Left cardiac atrium (tissue), 4 donors: ENCODE measurements at regions of chr18 and their contacts with region 1.

Region 1: GRCh38 chr18:26772715-26773114 is 92.8 kb downstream of the AQP4 start:
- DNase-seq: no peak
- ATAC-seq: no peak

Region 2: DNA sequence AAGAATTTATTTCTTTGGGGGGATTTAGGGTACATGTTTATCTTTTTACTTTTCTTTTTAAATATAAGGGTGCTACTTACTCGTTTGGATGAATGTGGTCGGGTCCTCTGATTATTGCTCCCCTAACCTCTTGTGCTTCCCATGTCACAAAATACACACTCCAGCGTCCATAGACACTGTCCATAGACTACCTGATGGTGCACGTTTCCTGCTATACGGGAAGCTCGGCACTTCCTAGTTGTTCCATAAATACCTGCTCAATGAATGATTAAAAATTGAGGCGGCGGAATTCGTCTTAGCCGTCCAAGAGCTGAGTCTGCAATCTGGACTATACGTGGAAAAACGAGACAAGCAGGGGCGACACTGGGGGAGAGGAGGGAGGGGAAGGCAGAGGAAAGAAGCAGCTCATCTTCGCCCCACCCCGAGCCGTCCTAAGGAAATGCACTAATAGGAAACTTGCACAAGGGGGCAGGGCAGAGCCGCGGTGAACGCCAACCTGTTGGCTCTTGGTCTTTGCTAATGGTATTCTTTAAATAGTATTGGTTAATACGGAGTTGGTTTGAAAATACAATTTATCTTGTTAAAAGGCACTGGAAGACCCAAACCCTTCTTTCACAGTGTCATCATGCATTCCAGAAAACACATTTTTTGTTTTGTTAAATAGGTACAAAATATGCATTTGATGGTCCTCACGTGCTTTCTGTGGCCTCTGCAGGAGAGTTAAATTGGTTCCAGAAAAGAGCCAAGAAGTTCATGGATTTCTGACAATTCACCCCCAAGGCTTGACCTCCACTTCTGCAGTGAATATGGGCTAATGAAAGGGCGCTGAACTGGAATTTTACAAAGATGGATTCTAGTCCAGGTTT is 151.3 kb before region 1 on chr18:
- intact Hi-C with region 1: loop called (anchors 1 to 5 kb)
- DNase-seq: peak; percentile 56
- ATAC-seq: peak; percentile 77 to 83